Endothelial cell of umbilical vein (primary cell): ENCODE measurements at regions of chr5 and their contacts with region 1.

Region 1: DNA sequence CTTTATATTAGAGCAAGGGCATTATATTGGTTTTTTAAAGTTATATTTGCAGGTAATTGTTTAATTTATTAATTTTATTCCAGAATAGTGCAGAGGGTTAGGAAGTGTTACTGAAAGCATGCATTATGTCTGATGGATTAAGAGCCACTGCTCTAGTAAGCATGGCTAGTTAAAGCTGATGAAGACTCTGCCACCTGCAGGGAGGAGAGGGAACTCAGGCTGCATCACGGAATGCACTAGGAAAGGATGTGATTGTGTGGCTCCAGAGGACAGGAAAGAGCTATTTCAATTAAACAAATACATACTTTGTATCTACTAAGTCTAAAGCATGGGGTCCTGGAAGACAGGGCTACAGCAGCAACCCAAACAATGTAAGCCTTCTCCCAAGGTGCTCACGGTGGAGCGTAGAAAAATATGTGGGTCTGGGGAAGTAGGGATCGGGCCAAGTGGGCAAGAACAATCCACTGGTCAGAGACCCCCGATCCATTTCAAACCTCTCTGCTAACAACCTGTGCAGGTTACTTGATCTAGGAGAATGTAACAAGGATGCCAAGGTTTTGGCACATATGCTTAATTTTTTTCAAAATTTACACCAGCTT is 15.3 kb upstream of the GRXCR2 start:
- DNase-seq: peak; percentile 64
- H3K4me3 ChIP-seq: no peak overlapping the region
- H3K27ac ChIP-seq: no peak overlapping the region
- H3K4me1 ChIP-seq: no peaks in the 10 kb centered on the region
- H3K27me3 ChIP-seq: peaks cover 0 to 9% of the 10 kb centered on the region in 2 experiments
- CTCF ChIP-seq: peak; percentile 63 to 78
- POLR2A ChIP-seq: no peak

Region 2: DNA sequence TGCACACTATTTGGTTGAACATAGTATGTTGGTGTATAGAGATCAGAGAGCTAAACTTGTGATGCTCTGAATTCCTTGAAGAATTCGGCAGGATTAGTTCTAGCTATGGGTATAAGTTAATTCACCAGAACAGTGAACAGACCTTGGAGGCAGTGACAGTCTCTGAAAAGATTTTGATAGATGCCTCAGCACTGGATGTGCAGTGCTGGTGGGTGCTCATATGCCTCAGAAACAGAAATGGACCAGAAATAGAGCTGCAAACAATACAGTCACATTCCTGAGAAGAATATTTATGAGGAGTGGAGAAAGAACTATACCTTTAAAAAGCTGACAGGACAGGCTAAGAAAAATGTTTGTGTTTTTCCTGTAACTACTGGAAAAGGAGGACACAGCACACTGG is 969.7 kb before region 1 on chr5:
- CTCF ChIA-PET with region 1: no interaction called
- POLR2A ChIA-PET with region 1: no interaction called
- dilution Hi-C with region 1: no loop called
- intact Hi-C with region 1: no loop called
- DNase-seq: no peak
- H3K4me3 ChIP-seq: no peak overlapping the region
- H3K27ac ChIP-seq: no peak overlapping the region
- H3K4me1 ChIP-seq: no peaks in the 10 kb centered on the region
- H3K27me3 ChIP-seq: no peaks in the 10 kb centered on the region
- CTCF ChIP-seq: no peak
- POLR2A ChIP-seq: no peak

Region 3: DNA sequence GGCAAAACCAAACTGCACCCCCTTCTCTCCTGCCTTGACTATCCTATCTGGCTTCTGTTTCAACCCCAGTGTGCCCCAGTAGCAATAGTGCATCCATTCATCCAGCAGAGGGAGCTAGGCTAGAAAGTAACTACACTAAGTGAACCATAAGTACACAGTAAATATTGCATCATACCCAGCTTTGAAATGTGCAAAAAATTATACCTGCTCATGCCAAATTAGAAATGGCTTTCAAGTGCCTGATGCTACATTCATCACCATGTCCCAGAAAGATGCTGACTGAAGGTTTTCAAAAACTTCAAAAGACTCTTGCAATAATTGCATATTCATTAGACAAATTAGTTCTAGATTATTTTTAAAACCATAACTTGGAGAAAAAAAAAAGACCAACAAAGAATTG is 206.4 kb before region 1 on chr5:
- CTCF ChIA-PET with region 1: interaction called, 22 read pairs
- POLR2A ChIA-PET with region 1: no interaction called
- dilution Hi-C with region 1: no loop called
- intact Hi-C with region 1: loop called (anchors 1 kb)
- DNase-seq: peak; percentile 75
- H3K4me3 ChIP-seq: no peak overlapping the region
- H3K27ac ChIP-seq: no peak overlapping the region
- H3K4me1 ChIP-seq: no peaks in the 10 kb centered on the region
- H3K27me3 ChIP-seq: no peaks in the 10 kb centered on the region
- CTCF ChIP-seq: peak; percentile 78 to 86
- POLR2A ChIP-seq: no peak

Region 4: DNA sequence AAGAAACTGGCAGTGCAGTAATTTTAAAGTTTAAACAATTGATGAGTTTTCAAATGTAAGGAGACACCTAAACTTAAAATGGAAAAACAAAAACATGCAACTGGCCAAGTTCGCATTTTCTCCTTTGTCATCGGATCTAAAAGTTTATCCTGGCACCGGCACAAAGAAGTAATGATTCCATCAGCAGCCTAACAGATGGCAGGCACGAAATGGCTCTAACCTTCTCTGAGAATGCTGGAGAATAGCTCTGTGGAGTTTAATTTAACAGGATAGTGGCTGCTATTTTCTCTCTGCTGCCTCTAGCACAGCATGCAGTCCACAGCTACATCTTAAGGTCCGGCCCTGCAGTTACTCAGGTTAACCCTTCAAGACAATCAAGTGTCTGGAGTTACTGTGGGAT is 135.1 kb before region 1 on chr5:
- CTCF ChIA-PET with region 1: interaction called, 3 read pairs
- POLR2A ChIA-PET with region 1: no interaction called
- dilution Hi-C with region 1: no loop called
- intact Hi-C with region 1: loop called (anchors 1 kb)
- DNase-seq: peak; percentile 76
- H3K4me3 ChIP-seq: peak overlapping the region in 1 of 3 experiments; percentile 27
- H3K27ac ChIP-seq: peak overlapping the region; percentile 51
- H3K4me1 ChIP-seq: peaks cover 27% of the 10 kb centered on the region
- H3K27me3 ChIP-seq: no peaks in the 10 kb centered on the region
- CTCF ChIP-seq: no peak
- POLR2A ChIP-seq: no peak

Region 5: DNA sequence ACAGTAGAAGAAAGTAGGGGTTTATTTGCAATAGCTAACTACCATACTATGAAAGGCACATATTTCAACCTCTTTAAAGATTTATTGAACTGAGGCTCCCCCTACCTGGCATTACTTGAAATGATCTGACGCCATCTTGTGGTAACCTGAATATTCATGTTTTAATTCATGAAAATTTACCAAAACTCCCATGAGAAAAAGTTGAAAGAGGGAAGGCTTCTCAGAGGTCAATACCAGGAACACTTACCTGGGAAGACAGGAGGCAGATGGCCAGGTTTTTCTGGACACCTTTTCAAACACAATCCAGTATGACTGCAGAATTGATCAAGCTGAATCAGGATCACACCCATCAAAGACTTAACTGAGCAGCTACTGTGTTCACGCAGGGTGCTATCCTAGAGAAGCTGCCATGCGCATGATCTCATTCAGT is 62.3 kb before region 1 on chr5:
- CTCF ChIA-PET with region 1: interaction called, 43 read pairs
- POLR2A ChIA-PET with region 1: no interaction called
- dilution Hi-C with region 1: no loop called
- intact Hi-C with region 1: loop called (anchors 1 kb)
- DNase-seq: peak; percentile 56
- H3K4me3 ChIP-seq: no peak overlapping the region
- H3K27ac ChIP-seq: no peak overlapping the region
- H3K4me1 ChIP-seq: peaks cover 21% of the 10 kb centered on the region
- H3K27me3 ChIP-seq: no peaks in the 10 kb centered on the region
- CTCF ChIP-seq: peak; percentile 54 to 59
- POLR2A ChIP-seq: no peak

Region 6: DNA sequence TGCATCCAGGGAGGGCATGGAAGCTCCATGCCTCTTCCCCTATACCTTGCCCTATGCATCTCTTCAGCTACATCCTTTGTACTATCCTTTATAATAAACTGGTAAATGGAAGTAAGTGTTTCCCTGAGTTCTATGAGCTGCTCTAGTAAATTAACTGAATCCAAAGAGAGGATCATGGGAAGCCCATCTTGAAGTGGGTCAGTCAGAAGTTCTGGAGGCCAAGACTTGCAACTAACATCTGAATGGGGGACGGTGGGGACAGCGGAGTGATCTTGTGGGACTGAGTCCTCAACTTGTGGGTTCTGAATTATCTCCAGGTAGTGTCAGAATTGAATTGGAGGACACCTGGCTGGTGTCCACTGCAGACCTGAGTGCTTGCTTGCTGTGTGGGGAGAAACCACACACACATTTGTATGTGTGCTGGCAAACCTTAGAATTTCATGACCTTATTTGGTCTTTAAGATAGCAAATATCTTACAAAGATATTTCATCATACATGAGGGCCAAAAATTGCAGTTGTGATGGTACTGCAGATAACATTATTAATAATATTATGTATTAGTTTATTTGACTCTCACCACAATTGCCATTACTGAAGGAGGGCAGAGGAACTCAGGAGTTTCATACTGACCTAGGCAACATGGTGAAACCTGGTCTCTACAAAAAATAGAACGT is 47.5 kb before region 1 on chr5:
- CTCF ChIA-PET with region 1: interaction called, 21 read pairs
- POLR2A ChIA-PET with region 1: no interaction called
- dilution Hi-C with region 1: no loop called
- intact Hi-C with region 1: no loop called
- DNase-seq: no peak
- H3K4me3 ChIP-seq: no peak overlapping the region
- H3K27ac ChIP-seq: no peak overlapping the region
- H3K4me1 ChIP-seq: peaks cover 4% of the 10 kb centered on the region
- H3K27me3 ChIP-seq: no peaks in the 10 kb centered on the region
- CTCF ChIP-seq: no peak
- POLR2A ChIP-seq: no peak

Region 7: GRCh38 chr5:145903113-145903512 is 15.0 kb after region 1 on chr5:
- CTCF ChIA-PET with region 1: interaction called, 15 read pairs
- POLR2A ChIA-PET with region 1: no interaction called
- dilution Hi-C with region 1: no loop called
- intact Hi-C with region 1: no loop called
- DNase-seq: no peak
- H3K4me3 ChIP-seq: no peak overlapping the region
- H3K27ac ChIP-seq: no peak overlapping the region
- H3K4me1 ChIP-seq: no peaks in the 10 kb centered on the region
- H3K27me3 ChIP-seq: peaks cover 0 to 2% of the 10 kb centered on the region in 2 experiments
- CTCF ChIP-seq: peak in 1 of 2 donors; percentile 18
- POLR2A ChIP-seq: no peak

Region 8: DNA sequence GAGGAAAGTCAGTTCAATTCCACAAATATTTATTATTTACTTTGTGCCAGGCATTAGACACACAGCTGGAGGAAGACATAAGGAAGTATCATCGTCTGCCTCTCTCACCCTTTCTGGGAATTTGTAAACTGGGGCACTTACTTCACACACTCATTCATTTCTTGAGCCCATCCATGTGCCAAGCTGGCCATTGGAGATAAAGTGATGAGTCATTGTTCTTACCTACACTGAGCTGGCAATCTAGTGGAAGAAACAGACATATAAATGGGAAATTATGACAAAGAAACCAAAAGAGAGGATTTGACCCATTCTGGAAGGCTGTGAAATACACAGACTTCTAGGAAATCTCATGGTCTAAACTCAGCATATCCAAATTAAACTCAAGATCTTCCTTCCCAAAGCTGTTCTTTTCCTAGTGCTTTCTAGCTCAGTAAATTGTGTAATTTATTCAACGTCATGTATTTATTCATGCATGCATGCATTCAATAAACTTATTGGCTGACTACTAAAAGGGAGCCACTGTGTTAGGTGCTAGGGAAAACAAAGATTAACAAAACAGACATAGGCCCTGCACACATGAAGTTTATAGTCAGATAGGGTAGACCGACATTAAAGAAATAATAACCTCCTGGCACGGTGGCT is 113.6 kb after region 1 on chr5:
- CTCF ChIA-PET with region 1: no interaction called
- POLR2A ChIA-PET with region 1: no interaction called
- dilution Hi-C with region 1: no loop called
- intact Hi-C with region 1: no loop called
- DNase-seq: no peak
- H3K4me3 ChIP-seq: no peak overlapping the region
- H3K27ac ChIP-seq: no peak overlapping the region
- H3K4me1 ChIP-seq: no peaks in the 10 kb centered on the region
- H3K27me3 ChIP-seq: no peaks in the 10 kb centered on the region
- CTCF ChIP-seq: no peak
- POLR2A ChIP-seq: no peak

Region 9: GRCh38 chr5:146213210-146213826 is 325.2 kb after region 1 on chr5:
- CTCF ChIA-PET with region 1: no interaction called
- POLR2A ChIA-PET with region 1: no interaction called
- dilution Hi-C with region 1: no loop called
- intact Hi-C with region 1: no loop called
- DNase-seq: peak; percentile 50
- H3K4me3 ChIP-seq: no peak overlapping the region
- H3K27ac ChIP-seq: no peak overlapping the region
- H3K4me1 ChIP-seq: no peaks in the 10 kb centered on the region
- H3K27me3 ChIP-seq: no peaks in the 10 kb centered on the region
- CTCF ChIP-seq: no peak
- POLR2A ChIP-seq: no peak